Mammary epithelial cell (primary cell): ENCODE measurements at regions of chr1 and their contacts with region 1.

Region 1: GRCh38 chr1:214261206-214262123 is 19.5 kb upstream of the SMYD2 start:
- DNase-seq: peak; percentile 62
- H3K4me3 ChIP-seq: no peak overlapping the region
- H3K27ac ChIP-seq: no peak overlapping the region
- H3K4me1 ChIP-seq: peaks cover 14% of the 10 kb centered on the region
- H3K27me3 ChIP-seq: no peaks in the 10 kb centered on the region
- CTCF ChIP-seq: peak; percentile 96 to 97

Region 2: DNA sequence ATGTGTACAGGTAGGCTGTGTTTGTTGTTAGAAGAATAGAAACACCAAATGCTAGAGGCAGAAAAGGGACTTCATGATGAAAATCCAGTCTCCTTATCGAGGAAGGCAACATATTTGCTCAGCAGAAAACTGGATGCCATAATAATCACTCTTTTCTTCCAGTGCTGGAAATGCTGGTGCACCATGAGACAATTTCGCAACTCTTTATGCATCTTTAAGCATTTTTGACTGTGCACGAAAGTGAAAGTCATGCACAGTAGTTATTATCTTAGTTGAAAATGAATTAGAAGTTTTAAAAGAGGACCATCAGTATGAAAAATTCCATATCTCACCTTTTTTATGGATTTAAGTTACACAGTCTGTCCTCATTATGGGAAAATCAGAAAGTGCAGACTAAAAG is 48.5 kb after region 1 on chr1:
- CTCF ChIA-PET with region 1: interaction called, 3 read pairs
- dilution Hi-C with region 1: loop called (anchors 5 kb)
- in situ Hi-C with region 1: no loop called
- intact Hi-C with region 1: no loop called
- DNase-seq: no peak
- H3K4me3 ChIP-seq: no peak overlapping the region
- H3K27ac ChIP-seq: no peak overlapping the region
- H3K4me1 ChIP-seq: no peaks in the 10 kb centered on the region
- H3K27me3 ChIP-seq: no peaks in the 10 kb centered on the region
- CTCF ChIP-seq: no peak

Region 3: DNA sequence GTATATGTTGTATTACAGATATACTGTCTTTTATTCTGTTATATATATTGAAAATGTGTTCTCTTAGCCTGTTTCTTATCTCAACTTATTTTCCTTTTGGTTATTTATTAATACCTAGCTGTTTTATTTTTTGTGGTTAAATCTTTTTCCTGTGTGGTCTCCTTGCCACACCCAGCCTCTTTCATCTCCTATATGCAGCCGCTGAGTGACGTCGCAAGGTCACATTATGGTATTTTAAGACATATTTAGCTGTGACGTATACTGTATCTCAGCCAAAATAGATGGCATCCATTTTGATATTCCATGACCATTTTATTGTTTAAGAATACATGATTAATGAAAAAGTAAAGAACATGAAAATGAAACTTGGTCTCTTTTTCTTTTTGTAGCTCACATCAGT is 370.6 kb after region 1 on chr1:
- CTCF ChIA-PET with region 1: interaction called, 4 read pairs
- dilution Hi-C with region 1: no loop called
- in situ Hi-C with region 1: no loop called
- intact Hi-C with region 1: loop called (anchors 5 kb)
- DNase-seq: no peak
- H3K4me3 ChIP-seq: no peak overlapping the region
- H3K27ac ChIP-seq: no peak overlapping the region
- H3K4me1 ChIP-seq: no peaks in the 10 kb centered on the region
- H3K27me3 ChIP-seq: no peaks in the 10 kb centered on the region
- CTCF ChIP-seq: no peak